CD4-positive, alpha-beta T cell (primary cell): ENCODE measurements at regions of chr22 and their contacts with region 1.

Region 1: GRCh38 chr22:25447686-25448434 is 116.6 kb upstream of the GRK3 start:
- DNase-seq: peak; percentile 77 to 95 (median 85)
- ATAC-seq: peak; percentile 95
- H3K4me3 ChIP-seq: peak overlapping the region; percentile 94
- H3K4me3 Mint-ChIP-seq: peak overlapping the region; percentile 96
- H3K27ac ChIP-seq: peak overlapping the region; percentile 31 to 67
- H3K27ac Mint-ChIP-seq: peak overlapping the region; percentile 88
- H3K4me1 ChIP-seq: peaks cover 25% of the 10 kb centered on the region
- H3K4me1 Mint-ChIP-seq: peaks cover 45% of the 10 kb centered on the region
- H3K27me3 ChIP-seq: no peaks in the 10 kb centered on the region
- H3K27me3 Mint-ChIP-seq: no peaks in the 10 kb centered on the region
- CTCF ChIP-seq: peak; percentile 88

Region 2: DNA sequence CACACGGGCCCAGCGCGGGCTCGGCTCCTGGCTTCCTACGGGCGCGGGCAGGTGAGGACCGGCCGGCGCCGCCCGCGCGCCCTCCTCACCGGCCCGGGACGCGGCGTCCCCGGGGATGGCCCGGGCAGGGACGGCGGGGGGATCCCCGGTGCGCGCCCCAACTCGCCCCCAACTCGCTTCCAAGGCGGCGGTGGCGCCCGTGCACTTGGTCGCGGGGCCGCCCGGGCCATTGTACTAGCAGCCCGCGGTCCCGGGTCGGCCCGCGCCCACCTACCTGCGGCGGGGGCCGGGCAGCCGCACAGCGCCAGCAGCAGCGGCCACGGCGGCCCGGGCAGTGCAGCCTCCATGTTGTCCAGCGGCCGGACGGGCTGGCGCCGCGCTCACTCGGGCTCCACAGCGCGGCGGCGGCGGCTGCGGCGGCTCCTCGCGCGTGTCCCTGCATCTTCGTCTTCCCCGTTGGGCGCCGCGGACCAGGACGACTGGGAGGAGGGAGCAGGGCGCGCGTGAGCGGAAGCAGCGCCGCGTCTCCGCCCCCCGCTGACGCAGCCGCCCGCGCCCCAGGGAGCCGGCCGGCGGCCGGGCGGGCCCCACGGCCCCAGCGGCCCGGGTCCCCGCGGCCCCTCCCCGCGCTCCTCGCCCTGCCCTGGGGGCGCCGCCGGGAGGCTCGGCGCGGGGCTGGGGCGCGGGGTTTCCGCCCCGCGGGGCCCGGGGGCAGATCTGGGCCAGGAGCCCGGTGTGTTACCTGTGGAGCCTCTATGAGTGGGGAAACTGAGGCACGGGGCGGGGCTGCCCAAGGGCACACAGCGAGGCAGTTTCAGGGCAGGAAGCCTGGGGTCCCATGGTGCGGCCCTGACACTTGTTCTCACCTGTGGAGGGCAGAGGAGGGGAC is 42.7 kb before region 1 on chr22:
- CTCF ChIA-PET with region 1: interaction called, 4 read pairs
- POLR2A ChIA-PET with region 1: no interaction called
- intact Hi-C with region 1: loop called in 1 of 2 experiments (anchors 5 kb)
- DNase-seq: peak; percentile 22 to 83 (median 58)
- ATAC-seq: peak; percentile 90
- H3K4me3 ChIP-seq: peak overlapping the region; percentile 59
- H3K4me3 Mint-ChIP-seq: peak overlapping the region; percentile 87
- H3K27ac ChIP-seq: peak overlapping the region in 1 of 2 donors; percentile 60
- H3K27ac Mint-ChIP-seq: peak overlapping the region; percentile 64
- H3K4me1 ChIP-seq: peaks cover 42% of the 10 kb centered on the region
- H3K4me1 Mint-ChIP-seq: peaks cover 33% of the 10 kb centered on the region
- H3K27me3 ChIP-seq: no peaks in the 10 kb centered on the region
- H3K27me3 Mint-ChIP-seq: no peaks in the 10 kb centered on the region
- CTCF ChIP-seq: no peak

Region 3: DNA sequence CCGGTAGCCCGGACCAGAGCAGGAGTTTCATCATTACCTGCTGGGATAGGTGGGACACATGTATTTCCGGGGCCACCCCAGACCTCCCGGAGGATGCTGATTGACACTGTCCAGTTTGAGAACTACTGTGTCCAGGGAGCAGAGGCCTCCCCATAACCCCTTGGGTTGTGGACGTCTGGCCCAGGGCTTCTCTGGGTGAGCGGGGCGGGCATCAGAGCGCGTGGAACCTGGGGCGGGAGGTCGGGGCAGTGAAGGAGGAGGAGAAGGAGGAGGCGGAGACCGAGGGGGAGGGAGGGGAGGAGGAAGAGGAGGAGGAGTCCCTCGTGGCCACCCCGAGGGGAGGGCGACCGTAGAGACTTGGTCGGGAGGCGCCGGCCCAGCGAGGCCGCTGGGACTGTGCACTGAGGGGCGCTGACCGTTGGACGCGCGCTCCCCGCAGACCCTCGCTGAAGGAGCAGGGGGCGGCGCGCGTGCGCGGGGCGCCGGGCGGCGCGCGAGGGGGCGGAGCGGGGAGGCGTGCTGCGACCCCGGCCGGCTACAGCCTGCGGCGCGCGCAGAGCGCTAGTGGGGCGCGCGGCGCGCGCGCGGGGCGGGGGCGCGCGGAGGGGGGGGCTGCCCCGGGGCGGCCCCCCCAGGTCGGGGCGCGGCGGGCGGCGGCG is 116.6 kb after region 1 on chr22 and contains the start of gene GRK3:
- CTCF ChIA-PET with region 1: no interaction called
- POLR2A ChIA-PET with region 1: no interaction called
- intact Hi-C with region 1: loop called in 1 of 2 experiments (anchors 5 kb)
- DNase-seq: peak in 13 of 14 experiments; percentile 11 to 72 (median 48)
- ATAC-seq: peak; percentile 66
- H3K4me3 ChIP-seq: peak within 1 kb of the TSS; percentile 59
- H3K4me3 Mint-ChIP-seq: peak within 1 kb of the TSS; percentile 92
- H3K27ac ChIP-seq: peak within 1 kb of the TSS in 1 of 2 donors; percentile 17
- H3K27ac Mint-ChIP-seq: peak within 1 kb of the TSS; percentile 22
- H3K4me1 ChIP-seq: peaks cover 20% of the 10 kb centered on the region
- H3K4me1 Mint-ChIP-seq: peaks cover 41% of the 10 kb centered on the region
- H3K27me3 ChIP-seq: peaks cover 0 to 2% of the 10 kb centered on the region in 2 experiments
- H3K27me3 Mint-ChIP-seq: peaks cover 7% of the 10 kb centered on the region
- CTCF ChIP-seq: no peak
- total RNA-seq, gene GRK3: 1.7 to 2.0 TPM

Region 4: GRCh38 chr22:25747245-25747944 is 299.5 kb after region 1 on chr22:
- CTCF ChIA-PET with region 1: no interaction called
- POLR2A ChIA-PET with region 1: no interaction called
- intact Hi-C with region 1: no loop called
- DNase-seq: peak in 1 of 14 experiments; percentile 24
- ATAC-seq: no peak
- H3K4me3 ChIP-seq: no peak overlapping the region
- H3K4me3 Mint-ChIP-seq: no peak overlapping the region
- H3K27ac ChIP-seq: no peak overlapping the region
- H3K27ac Mint-ChIP-seq: no peak overlapping the region
- H3K4me1 ChIP-seq: no peaks in the 10 kb centered on the region
- H3K4me1 Mint-ChIP-seq: no peaks in the 10 kb centered on the region
- H3K27me3 ChIP-seq: peaks cover 0 to 3% of the 10 kb centered on the region in 2 experiments
- H3K27me3 Mint-ChIP-seq: no peaks in the 10 kb centered on the region
- CTCF ChIP-seq: no peak

Region 5: GRCh38 chr22:25777870-25778269 is 330.0 kb after region 1 on chr22:
- CTCF ChIA-PET with region 1: no interaction called
- POLR2A ChIA-PET with region 1: no interaction called
- intact Hi-C with region 1: loop called in 1 of 2 experiments (anchors 5 kb)
- DNase-seq: no peak
- ATAC-seq: no peak
- H3K4me3 ChIP-seq: no peak overlapping the region
- H3K4me3 Mint-ChIP-seq: no peak overlapping the region
- H3K27ac ChIP-seq: no peak overlapping the region
- H3K27ac Mint-ChIP-seq: no peak overlapping the region
- H3K4me1 ChIP-seq: peaks cover 3% of the 10 kb centered on the region
- H3K4me1 Mint-ChIP-seq: peaks cover 1% of the 10 kb centered on the region
- H3K27me3 ChIP-seq: no peaks in the 10 kb centered on the region
- H3K27me3 Mint-ChIP-seq: peaks cover 4% of the 10 kb centered on the region
- CTCF ChIP-seq: no peak